Spleen (tissue), 13 donors: ENCODE measurements at regions of chr9 and their contacts with region 1.

Region 1: GRCh38 chr9:115127191-115127817 is 9.3 kb upstream of the TNC start:
- DNase-seq: no peak
- H3K4me3 ChIP-seq: no peak overlapping the region
- H3K27ac ChIP-seq: no peak overlapping the region
- H3K4me1 ChIP-seq: no peaks in the 10 kb centered on the region
- H3K27me3 ChIP-seq: no peaks in the 10 kb centered on the region
- CTCF ChIP-seq: no peak
- POLR2A ChIP-seq: no peak

Region 2: DNA sequence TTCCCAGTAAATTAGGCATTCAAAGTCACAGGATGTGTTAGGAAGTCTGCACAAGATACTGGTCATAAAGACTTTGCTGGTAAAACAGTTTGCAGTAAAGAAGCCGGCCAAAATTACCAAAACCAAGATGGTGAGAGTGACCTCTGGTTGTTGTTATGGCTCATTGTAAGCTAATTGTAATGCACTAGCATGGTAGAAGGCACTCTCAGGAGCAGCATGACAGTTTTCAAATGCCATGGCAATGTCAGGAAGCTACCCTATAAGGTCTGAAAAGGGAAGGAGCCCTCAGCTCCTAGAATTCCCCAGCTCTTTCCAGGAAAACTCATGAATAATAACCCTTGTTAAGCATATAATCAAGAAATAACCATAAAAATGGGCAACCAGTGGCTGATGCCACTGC is 55.0 kb after region 1 on chr9:
- intact Hi-C with region 1: loop called (anchors 10 kb)
- DNase-seq: no peak
- H3K4me3 ChIP-seq: no peak overlapping the region
- H3K27ac ChIP-seq: no peak overlapping the region
- H3K4me1 ChIP-seq: no peaks in the 10 kb centered on the region
- H3K27me3 ChIP-seq: no peaks in the 10 kb centered on the region
- CTCF ChIP-seq: no peak
- POLR2A ChIP-seq: no peak

Region 3: DNA sequence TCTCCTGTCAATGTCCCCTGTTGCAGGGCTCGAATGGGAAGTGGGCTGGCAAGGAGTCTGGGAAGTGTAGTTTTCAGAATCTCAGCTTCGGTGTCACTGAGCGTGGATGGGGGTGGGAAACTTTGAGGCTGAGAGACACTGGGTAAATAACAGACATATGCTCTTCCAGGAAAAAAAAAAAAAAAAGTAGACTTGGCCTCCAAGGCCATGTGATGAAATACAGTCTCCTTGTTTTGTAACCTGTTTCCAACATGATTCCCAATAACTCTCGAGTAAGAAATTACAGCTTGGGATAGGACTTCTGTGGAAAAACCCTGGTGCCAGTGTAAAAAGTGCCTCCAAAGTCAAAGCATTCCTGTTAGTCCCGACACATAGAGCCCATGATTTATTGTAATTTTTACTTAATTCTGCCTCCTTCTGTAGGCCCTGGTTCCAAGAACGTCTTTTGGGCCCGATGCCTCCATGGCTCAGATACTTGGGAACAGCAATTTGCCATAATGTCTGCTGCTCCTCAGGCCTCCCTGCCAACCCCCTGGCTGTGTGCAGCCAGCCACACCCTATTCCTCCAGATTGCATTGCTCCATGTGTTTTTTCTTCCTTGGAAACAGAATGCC is 110.2 kb after region 1 on chr9:
- intact Hi-C with region 1: no loop called
- DNase-seq: no peak
- H3K4me3 ChIP-seq: no peak overlapping the region
- H3K27ac ChIP-seq: no peak overlapping the region
- H3K4me1 ChIP-seq: no peaks in the 10 kb centered on the region
- H3K27me3 ChIP-seq: no peaks in the 10 kb centered on the region
- CTCF ChIP-seq: no peak
- POLR2A ChIP-seq: no peak